Psoas muscle (tissue), 8 donors: ENCODE measurements at regions of chr18 and their contacts with region 1.

Region 1: DNA sequence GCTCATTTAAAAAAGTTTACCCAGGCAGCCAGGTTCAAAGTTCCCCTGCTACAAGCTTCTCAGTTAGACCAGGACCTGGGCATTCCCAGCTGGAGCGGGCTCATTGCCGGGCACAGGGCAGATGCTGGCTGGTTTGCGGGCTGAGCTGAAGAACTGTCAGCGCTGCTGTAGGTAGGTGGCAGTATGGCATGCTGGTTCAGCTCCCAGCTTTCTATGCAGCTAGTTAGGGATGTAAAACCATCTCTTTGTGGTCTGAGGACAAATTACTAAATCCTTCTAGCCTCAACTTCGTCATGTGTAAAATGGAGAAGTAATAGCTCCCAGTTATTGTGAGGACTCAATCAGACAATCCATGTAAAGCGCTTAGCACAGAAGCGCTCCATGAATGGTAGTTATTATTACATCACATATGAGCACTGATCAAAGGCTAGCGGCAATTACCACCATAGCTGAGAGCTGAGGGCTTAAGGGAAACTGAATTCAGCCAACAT is 2.4 kb upstream of the LDLRAD4 start:
- DNase-seq: peak; percentile 56 to 85
- ATAC-seq: peak; percentile 75 to 81 (median 80)
- H3K4me3 ChIP-seq: peak overlapping the region; percentile 19
- H3K27ac ChIP-seq: peak overlapping the region; percentile 57
- H3K4me1 ChIP-seq: peaks cover 34% of the 10 kb centered on the region
- H3K27me3 ChIP-seq: no peaks in the 10 kb centered on the region
- CTCF ChIP-seq: peak; percentile 75

Region 2: DNA sequence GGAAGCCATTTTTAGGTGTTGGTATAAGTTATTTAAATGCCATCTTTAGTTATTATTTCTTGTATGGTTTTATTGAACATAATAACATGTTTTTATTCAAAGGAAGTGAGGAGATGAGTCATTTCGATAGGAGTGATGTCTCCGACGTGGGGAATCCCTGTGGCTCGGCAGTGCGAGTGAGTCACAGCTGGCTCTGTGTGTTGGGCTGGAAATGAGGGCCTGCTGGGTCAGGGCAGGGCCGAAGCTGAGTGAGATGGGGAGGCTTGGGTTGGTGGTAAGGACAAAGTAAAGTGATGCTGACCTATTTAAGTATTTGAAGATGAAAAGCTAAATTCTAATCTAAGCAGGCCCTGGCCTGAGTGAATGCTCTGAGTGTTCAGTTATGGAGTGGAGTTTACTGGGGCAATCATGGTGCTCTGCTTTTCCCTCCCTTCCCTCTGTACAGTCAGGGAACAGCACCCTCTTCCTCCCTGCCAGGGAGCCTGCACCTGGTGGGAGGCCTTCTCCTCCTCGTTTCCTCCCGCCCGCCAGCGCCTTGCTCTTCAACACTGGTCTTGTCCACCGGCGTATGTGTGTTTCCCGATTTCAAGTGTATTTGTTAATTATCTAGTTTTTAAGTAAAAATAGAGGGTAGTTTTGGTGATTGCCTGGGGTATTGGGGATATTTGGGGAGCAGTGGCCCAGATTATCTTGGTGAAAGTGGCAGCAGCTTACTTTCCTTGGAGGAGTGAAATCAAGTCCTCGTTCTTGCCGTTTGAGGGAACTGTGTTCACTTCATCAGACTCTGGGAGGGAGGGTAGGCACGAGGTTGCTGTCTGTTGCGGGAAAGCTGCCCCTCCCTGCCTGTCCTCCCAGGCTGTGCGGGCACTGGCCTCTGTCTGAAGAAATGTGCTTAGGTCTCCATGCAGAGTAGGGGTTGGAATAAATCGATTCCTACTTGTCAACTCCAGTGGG is 159.4 kb after region 1 on chr18:
- intact Hi-C with region 1: loop called (anchors 2 to 10 kb)
- DNase-seq: peak; percentile 79 to 84
- ATAC-seq: peak; percentile 67 to 71 (median 67)
- H3K4me3 ChIP-seq: no peak overlapping the region
- H3K27ac ChIP-seq: peak overlapping the region; percentile 70
- H3K4me1 ChIP-seq: peaks cover 51% of the 10 kb centered on the region
- H3K27me3 ChIP-seq: no peaks in the 10 kb centered on the region
- CTCF ChIP-seq: no peak

Region 3: GRCh38 chr18:13447626-13448334 is 231.6 kb after region 1 on chr18:
- intact Hi-C with region 1: loop called (anchors 5 to 10 kb)
- DNase-seq: peak; percentile 71 to 82
- ATAC-seq: peak; percentile 87 to 91 (median 89)
- H3K4me3 ChIP-seq: peak overlapping the region; percentile 40
- H3K27ac ChIP-seq: peak overlapping the region; percentile 28
- H3K4me1 ChIP-seq: peaks cover 46% of the 10 kb centered on the region
- H3K27me3 ChIP-seq: no peaks in the 10 kb centered on the region
- CTCF ChIP-seq: no peak

Region 4: GRCh38 chr18:13530879-13531387 is 314.8 kb after region 1 on chr18:
- intact Hi-C with region 1: loop called (anchors 2 to 5 kb)
- DNase-seq: peak; percentile 67 to 83
- ATAC-seq: peak; percentile 93 to 95 (median 94)
- H3K4me3 ChIP-seq: no peak overlapping the region
- H3K27ac ChIP-seq: no peak overlapping the region
- H3K4me1 ChIP-seq: peaks cover 8% of the 10 kb centered on the region
- H3K27me3 ChIP-seq: no peaks in the 10 kb centered on the region
- CTCF ChIP-seq: peak; percentile 74

Region 5: GRCh38 chr18:13629841-13630715 is 413.9 kb after region 1 on chr18:
- intact Hi-C with region 1: loop called (anchors 5 kb)
- DNase-seq: no peak
- ATAC-seq: peak; percentile 75 to 95 (median 90)
- H3K4me3 ChIP-seq: no peak overlapping the region
- H3K27ac ChIP-seq: no peak overlapping the region
- H3K4me1 ChIP-seq: no peaks in the 10 kb centered on the region
- H3K27me3 ChIP-seq: no peaks in the 10 kb centered on the region
- CTCF ChIP-seq: peak; percentile 76

Region 6: GRCh38 chr18:13800505-13801259 is 584.5 kb after region 1 on chr18:
- intact Hi-C with region 1: loop called in 1 of 2 experiments (anchors 5 kb)
- DNase-seq: peak; percentile 60 to 69
- ATAC-seq: peak; percentile 81 to 92 (median 82)
- H3K4me3 ChIP-seq: peak overlapping the region; percentile 55
- H3K27ac ChIP-seq: no peak overlapping the region
- H3K4me1 ChIP-seq: no peaks in the 10 kb centered on the region
- H3K27me3 ChIP-seq: peaks cover 0 to 23% (median 5%) of the 10 kb centered on the region in 3 donors
- CTCF ChIP-seq: peak; percentile 47